ENCODE measurements at regions of chr6 and their contacts with region 1.

Region 1: DNA sequence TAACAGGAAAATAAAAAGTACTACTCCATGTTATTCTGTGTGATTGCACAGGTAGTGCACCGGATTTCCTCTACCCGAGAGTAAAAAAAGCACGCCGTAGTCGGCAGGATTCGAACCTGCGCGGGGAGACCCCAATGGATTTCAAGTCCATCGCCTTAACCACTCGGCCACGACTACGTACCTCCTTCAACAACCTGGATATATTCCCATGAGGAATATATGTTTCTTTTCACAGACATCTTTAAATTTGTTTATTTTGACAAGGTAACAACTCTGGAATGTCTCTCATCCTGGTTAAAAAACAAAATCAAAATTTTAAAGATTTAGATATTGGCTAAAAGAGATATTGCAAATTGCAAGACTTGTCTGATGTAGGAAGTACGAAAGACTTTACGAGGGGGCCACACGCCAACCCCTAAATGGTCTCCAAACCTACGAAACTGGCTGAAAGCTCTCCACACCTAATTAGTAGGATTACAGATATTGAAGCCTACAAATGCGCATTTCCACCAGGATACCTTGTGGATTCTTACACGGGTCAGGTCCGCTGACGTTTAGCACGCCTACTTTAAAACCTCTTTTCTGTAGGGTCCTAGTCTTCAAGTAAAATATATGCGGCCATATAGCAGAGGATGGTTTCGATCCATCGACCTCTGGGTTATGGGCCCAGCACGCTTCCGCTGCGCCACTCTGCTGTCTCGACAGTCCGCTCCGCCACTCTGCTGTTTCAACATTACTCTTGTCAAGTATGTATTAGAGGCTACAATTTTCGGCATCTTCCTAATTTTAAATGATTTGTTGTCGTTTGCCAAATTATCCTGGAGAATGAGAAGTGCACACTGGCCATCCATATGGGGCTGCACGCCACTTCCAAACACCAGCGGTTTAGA is 52.3 kb upstream of the BTN3A2 start:
- DNase-seq: peak; percentile 64 to 91 (median 86)
- ATAC-seq: peak; percentile 75
- H3K4me3 ChIP-seq: peak overlapping the region; percentile 81
- H3K4me3 Mint-ChIP-seq: peak overlapping the region; percentile 83 to 100 (median 96)
- H3K27ac ChIP-seq: peak overlapping the region; percentile 55
- H3K27ac Mint-ChIP-seq: peak overlapping the region; percentile 82 to 100 (median 96)
- H3K4me1 ChIP-seq: peaks cover 4 to 19% of the 10 kb centered on the region in 2 donors
- H3K4me1 Mint-ChIP-seq: peaks cover 5 to 51% (median 37%) of the 10 kb centered on the region in 7 donors
- H3K27me3 ChIP-seq: no peaks in the 10 kb centered on the region
- H3K27me3 Mint-ChIP-seq: peaks cover 0 to 8% (median 0%) of the 10 kb centered on the region in 5 donors

Region 2: GRCh38 chr6:25842526-25843277 is 470.0 kb before region 1 on chr6:
- CTCF ChIA-PET with region 1: no interaction called
- POLR2A ChIA-PET with region 1: no interaction called
- intact Hi-C with region 1: no loop called
- DNase-seq: no peak
- ATAC-seq: no peak
- H3K4me3 ChIP-seq: no peak overlapping the region
- H3K4me3 Mint-ChIP-seq: no peak overlapping the region
- H3K27ac ChIP-seq: no peak overlapping the region
- H3K27ac Mint-ChIP-seq: no peak overlapping the region
- H3K4me1 ChIP-seq: no peaks in the 10 kb centered on the region
- H3K4me1 Mint-ChIP-seq: no peaks in the 10 kb centered on the region
- H3K27me3 ChIP-seq: no peaks in the 10 kb centered on the region
- H3K27me3 Mint-ChIP-seq: peaks cover 9 to 11% (median 10%) of the 10 kb centered on the region in 5 donors

Region 3: DNA sequence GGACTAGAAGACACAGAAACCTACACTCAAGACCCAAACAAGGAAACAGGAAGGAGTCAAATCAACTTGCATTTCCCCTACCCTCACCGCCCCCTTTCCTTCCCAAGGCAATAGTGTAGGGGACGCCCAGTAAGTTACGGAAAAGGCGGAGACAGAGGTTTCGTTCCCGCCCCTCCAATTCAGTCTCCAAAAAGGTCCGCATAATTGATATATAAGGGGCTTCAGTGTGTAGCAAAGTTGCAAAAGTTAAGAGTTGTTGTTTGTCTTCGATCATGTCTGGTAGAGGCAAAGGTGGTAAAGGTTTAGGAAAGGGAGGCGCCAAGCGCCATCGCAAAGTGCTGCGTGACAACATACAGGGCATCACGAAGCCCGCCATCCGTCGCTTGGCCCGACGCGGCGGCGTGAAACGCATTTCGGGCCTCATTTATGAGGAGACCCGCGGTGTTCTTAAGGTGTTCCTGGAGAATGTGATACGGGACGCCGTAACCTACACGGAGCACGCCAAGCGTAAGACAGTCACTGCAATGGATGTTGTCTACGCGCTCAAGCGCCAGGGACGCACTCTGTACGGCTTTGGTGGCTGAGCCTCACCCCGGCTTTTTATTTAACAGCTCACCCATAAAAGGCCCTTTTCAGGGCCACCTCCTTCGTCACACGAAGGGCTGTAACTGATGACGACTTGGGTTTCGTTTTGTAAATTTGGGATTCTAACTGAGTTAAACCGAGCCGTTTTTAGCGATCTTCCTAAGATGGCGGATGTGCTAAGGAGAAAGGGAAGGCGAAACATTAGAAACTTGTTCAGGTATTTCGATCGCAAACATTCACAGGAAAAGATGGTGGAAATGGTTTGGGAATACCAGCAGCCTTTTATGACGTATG is 72.4 kb before region 1 on chr6:
- CTCF ChIA-PET with region 1: interaction called, 3 read pairs
- POLR2A ChIA-PET with region 1: interaction called, 4 read pairs
- intact Hi-C with region 1: loop called in 1 of 2 experiments (anchors 2 kb)
- DNase-seq: peak; percentile 56 to 90 (median 78)
- ATAC-seq: peak; percentile 87
- H3K4me3 ChIP-seq: peak overlapping the region; percentile 55
- H3K4me3 Mint-ChIP-seq: peak overlapping the region; percentile 80 to 93 (median 89)
- H3K27ac ChIP-seq: peak overlapping the region; percentile 83
- H3K27ac Mint-ChIP-seq: peak overlapping the region; percentile 89 to 99 (median 96)
- H3K4me1 ChIP-seq: peaks cover 6 to 11% of the 10 kb centered on the region in 2 donors
- H3K4me1 Mint-ChIP-seq: peaks cover 8 to 37% (median 25%) of the 10 kb centered on the region in 7 donors
- H3K27me3 ChIP-seq: no peaks in the 10 kb centered on the region
- H3K27me3 Mint-ChIP-seq: no peaks in the 10 kb centered on the region

Region 4: DNA sequence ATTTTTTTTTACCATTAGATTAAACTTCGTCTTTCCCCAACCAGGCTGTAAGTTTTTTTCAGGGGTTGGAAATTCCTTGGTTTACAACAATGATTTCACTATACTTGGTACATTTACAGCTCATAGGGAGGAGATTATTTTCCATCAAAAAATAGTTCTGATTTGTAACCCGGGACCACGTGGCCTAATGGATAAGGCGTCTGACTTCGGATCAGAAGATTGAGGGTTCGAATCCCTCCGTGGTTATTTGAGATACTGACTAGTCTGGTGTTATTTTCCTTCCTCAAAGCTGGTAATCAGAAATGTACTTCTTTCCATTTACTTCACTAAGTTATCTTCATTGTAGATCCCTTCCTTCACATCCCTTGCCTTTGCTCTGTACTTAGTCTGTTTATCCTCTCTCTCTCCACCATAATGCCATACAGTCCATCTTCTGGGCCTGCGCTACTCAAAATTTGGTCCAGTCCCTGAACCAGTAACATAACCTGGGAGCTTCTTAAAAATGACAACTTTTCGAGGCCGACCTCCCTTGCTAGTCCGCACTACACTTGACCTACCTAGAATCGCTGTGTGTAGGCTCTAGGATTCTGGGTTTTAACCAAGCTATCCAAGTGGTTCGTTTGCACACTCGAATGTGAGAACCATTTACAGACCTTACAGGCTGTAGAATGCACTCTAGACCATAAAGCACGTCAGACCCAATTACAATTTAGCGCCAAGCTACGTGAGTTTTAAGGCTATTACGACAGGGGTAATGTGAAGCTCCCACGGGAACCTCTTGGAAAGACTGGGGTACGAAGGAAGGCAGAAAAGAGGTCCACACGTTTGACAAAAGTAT is 10.1 kb after region 1 on chr6:
- CTCF ChIA-PET with region 1: interaction called, 5 read pairs
- POLR2A ChIA-PET with region 1: interaction called, 16 read pairs
- intact Hi-C with region 1: loop called (anchors 1 kb)
- DNase-seq: peak in 8 of 9 donors; percentile 67 to 85 (median 79)
- ATAC-seq: peak; percentile 72
- H3K4me3 ChIP-seq: peak overlapping the region; percentile 82
- H3K4me3 Mint-ChIP-seq: peak overlapping the region; percentile 64 to 92 (median 88)
- H3K27ac ChIP-seq: peak overlapping the region; percentile 60
- H3K27ac Mint-ChIP-seq: peak overlapping the region; percentile 44 to 93 (median 89)
- H3K4me1 ChIP-seq: peaks cover 5 to 8% of the 10 kb centered on the region in 2 donors
- H3K4me1 Mint-ChIP-seq: peaks cover 2 to 58% (median 36%) of the 10 kb centered on the region in 7 donors
- H3K27me3 ChIP-seq: no peaks in the 10 kb centered on the region
- H3K27me3 Mint-ChIP-seq: peaks cover 5 to 21% (median 17%) of the 10 kb centered on the region in 5 donors

Region 5: GRCh38 chr6:26553635-26554446 is 241.1 kb after region 1 on chr6:
- CTCF ChIA-PET with region 1: no interaction called
- POLR2A ChIA-PET with region 1: interaction called, 3 read pairs
- intact Hi-C with region 1: loop called in 1 of 2 experiments (anchors 1 kb)
- DNase-seq: peak; percentile 44 to 86 (median 83)
- ATAC-seq: peak; percentile 66
- H3K4me3 ChIP-seq: peak overlapping the region; percentile 75
- H3K4me3 Mint-ChIP-seq: no peak overlapping the region
- H3K27ac ChIP-seq: peak overlapping the region; percentile 65
- H3K27ac Mint-ChIP-seq: no peak overlapping the region
- H3K4me1 ChIP-seq: peaks cover 7 to 18% of the 10 kb centered on the region in 2 donors
- H3K4me1 Mint-ChIP-seq: peaks cover 12 to 35% (median 24%) of the 10 kb centered on the region in 7 donors
- H3K27me3 ChIP-seq: no peaks in the 10 kb centered on the region
- H3K27me3 Mint-ChIP-seq: peaks cover 0 to 2% (median 0%) of the 10 kb centered on the region in 5 donors

Region 6: GRCh38 chr6:26596579-26597388 is 284.0 kb after region 1 on chr6 and contains the start of gene ABT1:
- CTCF ChIA-PET with region 1: no interaction called
- POLR2A ChIA-PET with region 1: no interaction called
- intact Hi-C with region 1: loop called in 1 of 2 experiments (anchors 1 kb)
- DNase-seq: peak; percentile 87 to 96 (median 95)
- ATAC-seq: peak; percentile 95
- H3K4me3 ChIP-seq: peak within 1 kb of the TSS; percentile 81
- H3K4me3 Mint-ChIP-seq: no peak within 1 kb of the TSS
- H3K27ac ChIP-seq: peak within 1 kb of the TSS; percentile 89
- H3K27ac Mint-ChIP-seq: peak within 1 kb of the TSS in 1 of 9 donors; percentile 92
- H3K4me1 ChIP-seq: peaks cover 17 to 22% of the 10 kb centered on the region in 2 donors
- H3K4me1 Mint-ChIP-seq: peaks cover 5 to 20% (median 10%) of the 10 kb centered on the region in 7 donors
- H3K27me3 ChIP-seq: peaks cover 8 to 14% of the 10 kb centered on the region in 2 donors
- H3K27me3 Mint-ChIP-seq: peaks cover 3 to 28% (median 16%) of the 10 kb centered on the region in 5 donors
- total RNA-seq, gene ABT1: 23.3 to 37.5 (median 35.0) TPM